ENCODE measurements at regions of chr2 and their contacts with region 1.

Region 1: GRCh38 chr2:79219383-79219988 is 59.9 kb upstream of the REG3A start:
- DNase-seq: peak; percentile 36
- H3K4me3 Mint-ChIP-seq: no peak overlapping the region
- H3K27ac Mint-ChIP-seq: no peak overlapping the region
- H3K4me1 Mint-ChIP-seq: no peaks in the 10 kb centered on the region
- H3K27me3 Mint-ChIP-seq: no peaks in the 10 kb centered on the region
- CTCF ChIP-seq: peak; percentile 46

Region 2: DNA sequence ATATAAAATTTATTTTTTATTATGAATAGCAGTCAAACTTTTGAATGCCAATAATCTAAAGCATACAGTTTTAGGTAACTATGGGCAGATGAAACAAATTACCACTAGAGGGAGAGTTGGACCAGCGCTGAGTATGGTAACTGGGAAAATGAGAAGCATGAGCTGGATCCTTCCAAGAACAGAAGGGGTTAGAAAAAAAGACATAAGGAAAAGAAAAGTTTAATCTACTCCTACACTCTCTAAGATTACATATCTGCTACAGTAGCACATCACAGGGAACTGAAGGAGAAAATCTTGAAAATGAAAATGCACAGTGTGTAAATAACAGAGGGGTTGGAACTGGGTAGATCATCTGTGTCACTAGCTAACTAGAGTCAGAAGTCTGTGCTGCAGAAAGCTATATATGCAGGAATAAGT is 178.4 kb before region 1 on chr2:
- CTCF ChIA-PET with region 1: no interaction called
- intact Hi-C with region 1: loop called (anchors 5 kb)
- DNase-seq: no peak
- H3K4me3 Mint-ChIP-seq: no peak overlapping the region
- H3K27ac Mint-ChIP-seq: no peak overlapping the region
- H3K4me1 Mint-ChIP-seq: no peaks in the 10 kb centered on the region
- H3K27me3 Mint-ChIP-seq: no peaks in the 10 kb centered on the region
- CTCF ChIP-seq: no peak

Region 3: DNA sequence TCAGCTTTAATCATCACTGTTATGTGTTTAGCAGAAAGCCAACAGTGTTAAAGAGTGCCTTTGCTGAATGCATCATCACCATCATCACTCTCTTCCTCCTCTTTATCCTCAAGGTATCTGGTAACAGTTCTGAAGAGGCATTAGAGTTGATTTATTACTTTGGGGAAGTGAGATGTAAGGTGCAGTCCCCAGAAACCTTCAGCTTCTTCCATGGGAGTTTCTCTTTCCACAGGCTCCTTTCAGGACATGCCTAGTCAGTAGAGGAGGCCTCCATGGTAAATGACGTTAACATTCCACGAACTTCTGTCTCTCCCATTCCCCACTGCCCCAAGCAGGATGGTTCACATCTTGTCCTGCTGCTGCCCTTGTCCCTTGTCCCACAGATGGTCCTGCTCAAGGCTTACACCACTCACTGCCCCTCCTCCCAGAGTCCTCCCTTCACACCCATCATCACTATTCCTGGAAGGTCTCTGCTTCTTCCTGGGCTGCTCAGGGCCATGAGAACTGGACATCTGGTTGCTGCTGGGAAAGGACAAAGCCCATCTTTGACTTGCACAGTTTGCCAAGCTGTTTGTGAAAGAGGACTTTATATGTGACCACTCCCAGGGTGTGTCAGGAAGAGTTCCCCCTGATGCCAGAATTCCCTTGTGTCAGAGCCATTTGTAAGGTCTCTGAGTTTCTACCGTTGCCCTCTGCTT is 104.5 kb before region 1 on chr2:
- CTCF ChIA-PET with region 1: no interaction called
- intact Hi-C with region 1: no loop called
- DNase-seq: no peak
- H3K4me3 Mint-ChIP-seq: no peak overlapping the region
- H3K27ac Mint-ChIP-seq: no peak overlapping the region
- H3K4me1 Mint-ChIP-seq: no peaks in the 10 kb centered on the region
- H3K27me3 Mint-ChIP-seq: no peaks in the 10 kb centered on the region
- CTCF ChIP-seq: no peak

Region 4: DNA sequence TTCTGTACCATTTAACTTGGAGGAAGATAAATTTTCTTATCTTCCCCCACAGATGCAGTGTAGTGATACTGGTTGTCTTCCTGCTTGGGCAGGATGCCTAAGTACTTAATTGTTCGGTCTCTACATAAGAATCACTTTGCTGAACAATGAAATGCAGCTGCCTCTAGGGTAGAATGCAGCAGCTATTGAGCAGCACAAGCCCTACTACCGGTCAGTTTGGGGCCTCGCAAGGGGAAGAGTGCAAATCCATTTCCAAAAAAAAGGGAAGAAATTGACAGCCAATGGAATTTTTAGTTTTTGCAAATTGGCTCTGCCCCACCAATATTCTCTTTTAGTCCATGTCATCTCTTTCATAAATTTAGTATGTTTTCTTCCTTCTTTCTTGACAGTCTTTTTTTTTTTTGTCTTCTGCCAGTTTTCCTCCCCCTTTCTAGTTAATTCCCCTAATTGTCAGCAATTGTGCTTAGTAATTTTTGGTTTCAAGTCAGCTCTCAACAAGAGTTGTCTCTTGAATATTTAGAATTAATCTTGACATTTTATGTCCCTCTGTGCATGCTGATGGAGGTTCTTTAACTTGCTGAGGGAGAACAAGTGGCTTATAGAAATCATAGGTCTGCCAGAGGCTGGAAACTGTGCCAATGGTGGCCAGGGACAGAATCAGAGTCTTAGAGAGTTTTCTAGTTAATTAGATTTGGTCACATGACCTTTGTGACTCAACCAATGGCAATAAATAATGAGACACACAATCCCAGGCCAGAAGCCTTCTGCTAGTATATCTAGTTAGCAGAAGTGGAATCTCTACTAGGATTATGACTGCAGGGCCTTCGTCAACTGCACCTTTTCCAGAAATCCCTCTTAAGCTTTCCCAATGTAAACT is 563.3 kb after region 1 on chr2:
- CTCF ChIA-PET with region 1: no interaction called
- intact Hi-C with region 1: no loop called
- DNase-seq: no peak
- H3K4me3 Mint-ChIP-seq: no peak overlapping the region
- H3K27ac Mint-ChIP-seq: no peak overlapping the region
- H3K4me1 Mint-ChIP-seq: no peaks in the 10 kb centered on the region
- H3K27me3 Mint-ChIP-seq: no peaks in the 10 kb centered on the region
- CTCF ChIP-seq: no peak

Region 5: DNA sequence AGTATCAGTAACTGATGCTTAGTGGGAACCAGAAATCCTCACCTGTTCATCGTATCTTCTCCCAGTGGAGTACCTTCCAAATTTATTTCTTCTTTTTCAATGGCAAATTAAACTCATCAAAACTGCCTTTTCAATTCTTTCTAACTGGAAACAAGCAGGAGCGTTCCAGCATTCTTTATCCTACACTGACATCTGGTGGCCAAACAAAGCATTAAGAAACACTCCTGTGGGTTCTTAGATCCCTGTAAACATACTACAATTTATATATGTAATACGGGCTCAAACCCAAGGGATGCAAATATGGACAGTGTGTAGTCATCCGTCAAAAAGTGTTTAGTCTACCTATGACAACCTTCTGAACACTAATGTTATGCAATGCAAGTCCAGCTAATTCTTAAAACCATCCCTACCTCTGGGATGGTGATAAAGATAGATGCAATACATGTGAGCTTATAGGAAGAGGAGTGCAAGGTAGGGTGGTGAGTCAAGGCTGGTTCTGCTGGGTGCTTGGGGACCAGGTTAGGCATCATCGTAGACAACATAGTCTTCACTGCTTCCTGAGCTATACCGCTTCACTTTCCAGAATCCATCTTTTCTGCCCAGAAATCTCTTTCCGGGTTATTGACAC is 668.4 kb after region 1 on chr2:
- CTCF ChIA-PET with region 1: no interaction called
- intact Hi-C with region 1: loop called (anchors 5 kb)
- DNase-seq: peak; percentile 44
- H3K4me3 Mint-ChIP-seq: no peak overlapping the region
- H3K27ac Mint-ChIP-seq: no peak overlapping the region
- H3K4me1 Mint-ChIP-seq: no peaks in the 10 kb centered on the region
- H3K27me3 Mint-ChIP-seq: no peaks in the 10 kb centered on the region
- CTCF ChIP-seq: peak; percentile 62